ENCODE measurements at regions of chr4 and their contacts with region 1.

Region 1: GRCh38 chr4:51885363-51885762 is 42.4 kb downstream of the DCUN1D4 start:
- DNase-seq: peak; percentile 13 to 28 (median 22)
- ATAC-seq: peak; percentile 72
- H3K4me3 ChIP-seq: no peak overlapping the region
- H3K27ac ChIP-seq: no peak overlapping the region
- H3K4me1 ChIP-seq: no peaks in the 10 kb centered on the region
- H3K27me3 ChIP-seq: no peaks in the 10 kb centered on the region
- CTCF ChIP-seq: peak in 1 of 3 experiments; percentile 22; a peak in 1 of 6 replicates
- EP300 ChIP-seq: no peak
- POLR2A ChIP-seq: no peak
- RAD21 ChIP-seq: peak in 1 of 2 experiments; percentile 3; a peak in 1 of 4 replicates

Region 2: DNA sequence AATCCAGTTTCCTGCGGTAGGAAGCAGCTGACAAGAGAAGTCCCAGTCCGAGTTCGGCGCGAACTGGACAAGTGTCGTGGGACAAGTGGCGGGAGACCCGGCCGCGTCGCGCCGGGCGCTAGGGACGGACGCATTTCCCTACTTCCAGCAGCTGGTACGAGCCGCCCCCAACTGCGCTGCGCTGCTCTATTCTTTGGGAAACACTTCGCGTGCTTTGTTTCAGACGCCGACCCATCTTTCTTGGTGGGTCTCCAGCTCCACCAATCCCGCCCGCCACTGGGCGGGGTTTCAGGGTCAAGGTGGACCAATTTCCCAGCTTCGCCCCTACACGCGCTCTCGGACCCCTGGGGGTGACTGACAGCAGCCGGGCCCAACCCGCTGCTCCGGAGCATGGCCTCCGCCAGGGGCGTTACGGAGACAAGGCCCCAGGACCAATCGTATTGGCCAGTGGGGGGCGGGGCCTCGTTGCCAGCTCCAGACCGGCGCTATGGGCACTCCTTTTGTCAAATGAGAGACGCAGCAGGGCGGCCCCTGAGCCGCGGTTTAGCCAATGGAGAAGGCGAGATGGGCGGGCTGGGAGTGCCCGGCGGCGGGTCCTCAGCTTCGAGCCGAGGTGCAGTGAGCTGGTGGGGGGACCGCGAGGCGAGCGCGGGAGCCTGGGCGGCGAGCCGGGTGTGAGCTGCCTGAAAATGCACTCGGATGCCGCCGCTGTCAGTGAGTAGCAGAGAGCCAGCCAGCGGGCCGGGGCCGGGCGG is 42.6 kb before region 1 on chr4 and contains the start of gene DCUN1D4:
- CTCF ChIA-PET with region 1: no interaction called
- POLR2A ChIA-PET with region 1: interaction called, 3 read pairs
- in situ Hi-C with region 1: no loop called
- intact Hi-C with region 1: loop called (anchors 5 kb)
- DNase-seq: peak; percentile 99 to 100 (median 99)
- ATAC-seq: peak; percentile 90
- H3K4me3 ChIP-seq: peak within 1 kb of the TSS; percentile 81
- H3K27ac ChIP-seq: peak within 1 kb of the TSS; percentile 90
- H3K4me1 ChIP-seq: peaks cover 0 to 14% of the 10 kb centered on the region in 2 experiments; a peak in 2 of 5 replicates
- H3K27me3 ChIP-seq: no peaks in the 10 kb centered on the region
- CTCF ChIP-seq: peak; percentile 44 to 61 (median 53)
- EP300 ChIP-seq: no peak
- POLR2A ChIP-seq: peak; percentile 82
- RAD21 ChIP-seq: no peak
- polyA plus RNA-seq, gene DCUN1D4: 17.0 TPM

Region 3: GRCh38 chr4:52172166-52172565 is 286.8 kb after region 1 on chr4:
- CTCF ChIA-PET with region 1: no interaction called
- POLR2A ChIA-PET with region 1: no interaction called
- in situ Hi-C with region 1: no loop called
- intact Hi-C with region 1: no loop called
- DNase-seq: peak in 1 of 4 experiments; percentile 3
- ATAC-seq: no peak
- H3K4me3 ChIP-seq: no peak overlapping the region
- H3K27ac ChIP-seq: no peak overlapping the region
- H3K4me1 ChIP-seq: no peaks in the 10 kb centered on the region
- H3K27me3 ChIP-seq: no peaks in the 10 kb centered on the region
- CTCF ChIP-seq: peak in 2 of 3 experiments; percentile 12 to 21; a peak in 1 of 6 replicates
- EP300 ChIP-seq: no peak
- POLR2A ChIP-seq: no peak
- RAD21 ChIP-seq: no peak

Measured in K562 (cell line).